ENCODE measurements at regions of chr11 and their contacts with region 1.

Region 1: DNA sequence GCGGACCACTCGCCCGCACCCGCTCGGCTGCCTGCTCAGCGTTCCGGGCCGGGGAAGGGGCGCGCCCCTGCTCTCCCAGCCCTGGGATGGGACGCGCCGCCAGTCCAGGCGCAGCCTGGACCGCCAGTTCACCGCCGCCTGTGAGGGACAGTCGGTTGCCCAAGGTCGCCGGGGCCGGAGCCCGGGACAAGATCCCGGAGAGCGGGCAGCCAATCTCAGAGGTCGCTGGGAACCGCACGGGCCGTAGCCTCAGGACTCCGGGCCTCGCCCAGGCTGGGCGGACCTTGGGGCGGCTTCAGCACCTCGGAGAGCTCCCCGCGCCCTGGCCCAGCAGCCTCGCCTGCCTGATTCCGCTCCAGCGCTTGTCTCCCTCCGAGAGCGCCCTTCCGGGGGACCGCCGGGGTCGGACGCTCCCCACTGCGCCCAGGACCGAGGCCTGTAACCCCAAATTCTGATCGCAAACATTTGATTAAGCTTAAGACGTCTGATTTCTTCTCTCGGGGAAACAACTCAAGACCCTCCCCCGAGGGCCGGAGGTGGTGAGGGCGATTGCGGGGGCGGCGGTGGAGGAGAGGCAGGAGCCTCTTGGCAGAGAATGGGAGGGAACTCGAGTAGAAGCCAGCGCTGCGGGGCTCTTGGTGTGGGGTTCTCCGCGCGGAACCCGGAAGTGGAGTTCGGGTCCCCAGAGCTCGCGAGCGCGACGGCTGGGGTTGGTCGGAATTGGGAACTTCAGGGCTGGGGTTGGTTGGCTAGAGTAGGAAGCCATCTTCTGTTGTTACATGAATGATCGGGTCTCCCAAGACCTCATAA is 1.1 kb upstream of the CHRM4 start:
- DNase-seq: peak; percentile 90
- ATAC-seq: peak; percentile 94

Region 2: GRCh38 chr11:46529095-46529905 is 136.7 kb after region 1 on chr11:
- intact Hi-C with region 1: loop called (anchors 2 kb)
- DNase-seq: peak; percentile 75
- ATAC-seq: peak; percentile 69

Region 3: GRCh38 chr11:46537537-46538295 is 145.1 kb after region 1 on chr11:
- intact Hi-C with region 1: loop called (anchors 2 kb)
- DNase-seq: no peak
- ATAC-seq: peak; percentile 74

Region 4: GRCh38 chr11:46865340-46865739 is 472.7 kb after region 1 on chr11:
- intact Hi-C with region 1: no loop called
- DNase-seq: no peak
- ATAC-seq: no peak